ENCODE measurements at regions of chr1 and their contacts with region 1.

Region 1: DNA sequence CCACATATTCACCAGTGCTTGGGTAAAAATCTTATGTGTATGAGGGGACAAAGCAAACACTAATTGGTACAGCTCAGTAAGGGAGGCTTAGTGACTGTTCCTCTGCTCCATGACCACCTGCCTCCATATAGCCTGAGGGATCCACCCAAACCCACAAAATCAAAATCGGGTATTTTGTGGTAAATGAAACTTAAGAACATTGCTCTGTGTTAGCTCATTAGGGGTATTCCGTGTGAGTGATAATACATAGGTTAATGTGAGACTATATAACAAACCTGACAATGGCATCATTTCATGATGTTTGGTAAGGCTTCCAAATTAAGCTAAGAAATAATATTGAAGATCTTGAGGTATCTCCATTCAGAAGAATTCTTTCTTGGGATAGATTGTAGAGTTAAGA is 25.8 kb downstream of the COL9A2 start:
- DNase-seq: no peak
- H3K4me3 ChIP-seq: no peak overlapping the region
- H3K27ac ChIP-seq: no peak overlapping the region
- H3K27me3 ChIP-seq: no peaks in the 10 kb centered on the region
- CTCF ChIP-seq: no peak

Region 2: GRCh38 chr1:40305457-40305856 is 14.2 kb after region 1 on chr1:
- CTCF ChIA-PET with region 1: no interaction called
- POLR2A ChIA-PET with region 1: interaction called, 14 read pairs
- DNase-seq: no peak
- H3K4me3 ChIP-seq: no peak overlapping the region
- H3K27ac ChIP-seq: no peak overlapping the region
- H3K27me3 ChIP-seq: peaks cover 2% of the 10 kb centered on the region
- CTCF ChIP-seq: peak; percentile 19; the same call in 1 of the 2 replicates